ENCODE measurements at regions of chr3 and their contacts with region 1.

Region 1: GRCh38 chr3:120239644-120240043 is 45.4 kb downstream of the GPR156 start:
- DNase-seq: no peak
- ATAC-seq: no peak
- H3K4me3 ChIP-seq: no peak overlapping the region
- H3K27ac ChIP-seq: no peak overlapping the region
- H3K4me1 ChIP-seq: no peaks in the 10 kb centered on the region
- H3K27me3 ChIP-seq: no peaks in the 10 kb centered on the region
- CTCF ChIP-seq: no peak
- EP300 ChIP-seq: no peak
- POLR2A ChIP-seq: no peak
- RAD21 ChIP-seq: no peak

Region 2: GRCh38 chr3:119219069-119219468 is 1020.6 kb before region 1 on chr3:
- CTCF ChIA-PET with region 1: no interaction called
- POLR2A ChIA-PET with region 1: no interaction called
- RAD21 ChIA-PET with region 1: no interaction called
- SMC1A ChIA-PET with region 1: no interaction called
- in situ Hi-C with region 1: no loop called
- intact Hi-C with region 1: no loop called
- DNase-seq: no peak
- ATAC-seq: no peak
- H3K4me3 ChIP-seq: no peak overlapping the region
- H3K27ac ChIP-seq: no peak overlapping the region
- H3K4me1 ChIP-seq: no peaks in the 10 kb centered on the region
- H3K27me3 ChIP-seq: no peaks in the 10 kb centered on the region
- CTCF ChIP-seq: no peak
- EP300 ChIP-seq: no peak
- POLR2A ChIP-seq: no peak
- RAD21 ChIP-seq: no peak

Region 3: GRCh38 chr3:120410541-120410940 is 170.9 kb after region 1 on chr3:
- CTCF ChIA-PET with region 1: interaction called, 210 read pairs
- POLR2A ChIA-PET with region 1: no interaction called
- RAD21 ChIA-PET with region 1: interaction called, 75 read pairs
- SMC1A ChIA-PET with region 1: interaction called, 90 read pairs
- in situ Hi-C with region 1: loop called (anchors 5 kb)
- intact Hi-C with region 1: no loop called
- DNase-seq: no peak
- ATAC-seq: no peak
- H3K4me3 ChIP-seq: no peak overlapping the region
- H3K27ac ChIP-seq: no peak overlapping the region
- H3K4me1 ChIP-seq: no peaks in the 10 kb centered on the region
- H3K27me3 ChIP-seq: no peaks in the 10 kb centered on the region
- CTCF ChIP-seq: no peak
- EP300 ChIP-seq: no peak
- POLR2A ChIP-seq: no peak
- RAD21 ChIP-seq: no peak

Region 4: GRCh38 chr3:120558771-120559241 is 319.2 kb after region 1 on chr3:
- CTCF ChIA-PET with region 1: interaction called, 55 read pairs
- POLR2A ChIA-PET with region 1: no interaction called
- RAD21 ChIA-PET with region 1: interaction called, 24 read pairs
- SMC1A ChIA-PET with region 1: interaction called, 20 read pairs
- in situ Hi-C with region 1: loop called (anchors 5 kb)
- intact Hi-C with region 1: loop called (anchors 1 kb)
- DNase-seq: peak; percentile 33
- ATAC-seq: peak; percentile 93
- H3K4me3 ChIP-seq: peak overlapping the region; percentile 55; the same call in 1 of the 2 replicates
- H3K27ac ChIP-seq: no peak overlapping the region
- H3K4me1 ChIP-seq: peaks cover 3% of the 10 kb centered on the region; the same call in 1 of the 2 replicates
- H3K27me3 ChIP-seq: no peaks in the 10 kb centered on the region
- CTCF ChIP-seq: peak; percentile 88 to 95 (median 95)
- EP300 ChIP-seq: peak in 1 of 2 experiments; percentile 43; a peak in 1 of 4 replicates
- POLR2A ChIP-seq: no peak
- RAD21 ChIP-seq: peak; percentile 84

Measured in GM12878 (cell line).